CD8-positive, alpha-beta T cell (primary cell): ENCODE measurements at regions of chr1 and their contacts with region 1.

Region 1: GRCh38 chr1:1307908-1308755 is at the starts of genes ACAP3 and PUSL1:
- DNase-seq: peak; percentile 79 to 96 (median 87)
- ATAC-seq: peak; percentile 72
- H3K4me3 ChIP-seq: peak within 1 kb of the TSS; percentile 59 to 94
- H3K4me3 Mint-ChIP-seq: peak within 1 kb of the TSS; percentile 87
- H3K27ac ChIP-seq: peak within 1 kb of the TSS; percentile 79 to 82
- H3K27ac Mint-ChIP-seq: peak within 1 kb of the TSS; percentile 90
- H3K4me1 ChIP-seq: peaks cover 35% of the 10 kb centered on the region
- H3K4me1 Mint-ChIP-seq: peaks cover 20% of the 10 kb centered on the region
- H3K27me3 ChIP-seq: no peaks in the 10 kb centered on the region
- H3K27me3 Mint-ChIP-seq: no peaks in the 10 kb centered on the region
- CTCF ChIP-seq: no peak
- total RNA-seq, gene ACAP3: 46.6 to 47.5 TPM
- total RNA-seq, gene PUSL1: 17.1 to 17.5 TPM

Region 2: GRCh38 chr1:958823-959729 is 349.1 kb before region 1 on chr1 and contains the start of gene NOC2L:
- CTCF ChIA-PET with region 1: no interaction called
- POLR2A ChIA-PET with region 1: no interaction called
- intact Hi-C with region 1: loop called in 1 of 2 experiments (anchors 1 kb)
- DNase-seq: peak; percentile 91 to 99 (median 96)
- ATAC-seq: peak; percentile 83
- H3K4me3 ChIP-seq: peak within 1 kb of the TSS; percentile 99 to 100
- H3K4me3 Mint-ChIP-seq: peak within 1 kb of the TSS; percentile 86
- H3K27ac ChIP-seq: peak within 1 kb of the TSS; percentile 75 to 80
- H3K27ac Mint-ChIP-seq: peak within 1 kb of the TSS; percentile 77
- H3K4me1 ChIP-seq: peaks cover 29% of the 10 kb centered on the region
- H3K4me1 Mint-ChIP-seq: peaks cover 8% of the 10 kb centered on the region
- H3K27me3 ChIP-seq: no peaks in the 10 kb centered on the region
- H3K27me3 Mint-ChIP-seq: no peaks in the 10 kb centered on the region
- CTCF ChIP-seq: no peak
- total RNA-seq, gene NOC2L: 54.0 to 54.7 TPM

Region 3: DNA sequence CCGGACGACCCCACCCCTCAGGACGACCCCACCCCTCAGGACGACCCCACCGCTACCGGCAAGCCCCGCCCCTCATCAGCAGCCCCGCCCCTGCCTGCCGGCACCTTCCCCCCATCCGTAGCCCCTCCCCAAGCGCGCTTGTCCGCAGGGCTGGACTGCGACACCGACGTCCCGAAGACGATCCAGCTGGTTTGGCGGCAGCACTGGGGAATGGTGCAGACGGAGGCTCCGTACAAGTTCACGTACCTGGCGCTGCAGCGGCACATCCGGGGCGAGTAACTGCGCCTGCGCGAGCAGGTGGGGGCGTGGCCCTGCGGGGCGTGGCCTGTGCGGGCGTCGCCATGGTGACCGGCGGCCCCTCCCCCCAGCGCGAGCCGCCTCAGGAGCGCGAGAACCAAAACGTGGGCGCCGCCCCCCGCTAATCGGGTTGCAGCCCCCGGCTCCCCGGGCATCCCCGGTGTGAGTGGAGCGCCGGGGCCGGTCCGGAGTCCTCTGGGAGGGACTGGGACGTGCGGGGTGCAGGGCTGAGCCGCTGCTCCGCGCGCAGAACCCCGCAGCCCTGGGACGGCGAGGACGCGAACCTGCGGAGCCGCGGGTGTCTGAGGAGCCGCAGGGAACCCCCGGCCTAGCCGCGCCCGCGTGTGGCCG is 238.9 kb before region 1 on chr1:
- CTCF ChIA-PET with region 1: no interaction called
- POLR2A ChIA-PET with region 1: no interaction called
- intact Hi-C with region 1: loop called in 1 of 2 experiments (anchors 5 kb)
- DNase-seq: peak; percentile 86 to 97 (median 89)
- ATAC-seq: peak; percentile 58
- H3K4me3 ChIP-seq: peak overlapping the region; percentile 65 to 88
- H3K4me3 Mint-ChIP-seq: peak overlapping the region; percentile 81
- H3K27ac ChIP-seq: peak overlapping the region; percentile 53 to 55
- H3K27ac Mint-ChIP-seq: peak overlapping the region; percentile 80
- H3K4me1 ChIP-seq: peaks cover 20% of the 10 kb centered on the region
- H3K4me1 Mint-ChIP-seq: peaks cover 7% of the 10 kb centered on the region
- H3K27me3 ChIP-seq: peaks cover 0 to 8% of the 10 kb centered on the region in 2 experiments
- H3K27me3 Mint-ChIP-seq: no peaks in the 10 kb centered on the region
- CTCF ChIP-seq: no peak

Region 4: DNA sequence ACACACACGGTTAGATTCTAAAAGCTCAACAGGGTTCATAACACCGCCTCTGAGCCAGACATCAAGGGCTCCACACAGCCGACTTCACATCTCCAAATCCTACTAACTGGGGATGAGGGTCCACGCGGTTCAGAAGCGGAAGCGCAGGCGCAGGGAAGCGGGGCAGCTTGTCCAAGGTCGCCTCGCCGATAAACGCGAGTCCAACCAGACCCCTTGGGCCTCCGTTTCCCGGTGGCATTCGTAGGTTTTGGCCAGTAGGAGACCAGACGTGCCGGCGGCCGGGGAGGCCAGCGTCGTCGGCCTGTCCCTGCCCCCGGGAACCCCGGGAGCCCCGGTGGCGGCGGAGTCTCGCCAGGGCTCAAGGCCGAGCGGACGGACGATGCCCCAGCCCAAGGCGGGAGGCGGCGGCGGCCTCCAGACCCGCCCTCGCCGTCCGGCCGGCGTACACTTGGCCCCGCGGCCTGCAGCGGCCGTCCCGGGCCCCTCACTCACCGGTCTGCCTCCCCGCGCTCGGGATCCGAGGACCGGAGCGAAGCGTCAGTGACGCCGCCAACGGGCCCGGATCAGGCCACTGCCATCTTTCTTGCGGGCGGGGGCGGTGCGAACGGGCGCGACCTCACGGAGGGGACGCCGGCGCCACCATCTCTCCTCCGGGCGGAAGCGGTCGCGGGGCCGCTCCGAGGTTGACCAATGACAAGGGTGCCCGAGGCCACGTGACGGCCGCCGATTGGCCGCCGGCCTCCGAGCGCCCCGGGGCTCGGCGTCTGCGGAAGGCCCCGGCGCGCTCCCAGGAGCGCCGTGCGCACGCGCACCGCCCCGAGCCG is 76.5 kb before region 1 on chr1 and contains the start of gene SDF4:
- CTCF ChIA-PET with region 1: no interaction called
- POLR2A ChIA-PET with region 1: no interaction called
- intact Hi-C with region 1: loop called in 1 of 2 experiments (anchors 1 kb)
- DNase-seq: peak; percentile 91 to 99 (median 96)
- ATAC-seq: peak; percentile 93
- H3K4me3 ChIP-seq: peak within 1 kb of the TSS; percentile 92 to 96
- H3K4me3 Mint-ChIP-seq: peak within 1 kb of the TSS; percentile 93
- H3K27ac ChIP-seq: peak within 1 kb of the TSS; percentile 80 to 88
- H3K27ac Mint-ChIP-seq: peak within 1 kb of the TSS; percentile 92
- H3K4me1 ChIP-seq: peaks cover 40% of the 10 kb centered on the region
- H3K4me1 Mint-ChIP-seq: peaks cover 39% of the 10 kb centered on the region
- H3K27me3 ChIP-seq: no peaks in the 10 kb centered on the region
- H3K27me3 Mint-ChIP-seq: no peaks in the 10 kb centered on the region
- CTCF ChIP-seq: no peak
- total RNA-seq, gene SDF4: 66.6 to 70.3 TPM

Region 5: GRCh38 chr1:1349256-1350012 is 41.3 kb after region 1 on chr1 and contains the start of gene DVL1:
- CTCF ChIA-PET with region 1: interaction called, 3 read pairs
- POLR2A ChIA-PET with region 1: interaction called, 3 read pairs
- intact Hi-C with region 1: loop called in 1 of 2 experiments (anchors 1 kb)
- DNase-seq: peak; percentile 50 to 86 (median 72)
- ATAC-seq: peak; percentile 84
- H3K4me3 ChIP-seq: peak within 1 kb of the TSS; percentile 57 to 63
- H3K4me3 Mint-ChIP-seq: peak within 1 kb of the TSS; percentile 76
- H3K27ac ChIP-seq: peak within 1 kb of the TSS; percentile 46 to 72
- H3K27ac Mint-ChIP-seq: peak within 1 kb of the TSS; percentile 41
- H3K4me1 ChIP-seq: peaks cover 27% of the 10 kb centered on the region
- H3K4me1 Mint-ChIP-seq: peaks cover 29% of the 10 kb centered on the region
- H3K27me3 ChIP-seq: peaks cover 0 to 16% of the 10 kb centered on the region in 2 experiments
- H3K27me3 Mint-ChIP-seq: peaks cover 8% of the 10 kb centered on the region
- CTCF ChIP-seq: peak; percentile 43
- total RNA-seq, gene DVL1: 44.5 to 45.5 TPM

Region 6: DNA sequence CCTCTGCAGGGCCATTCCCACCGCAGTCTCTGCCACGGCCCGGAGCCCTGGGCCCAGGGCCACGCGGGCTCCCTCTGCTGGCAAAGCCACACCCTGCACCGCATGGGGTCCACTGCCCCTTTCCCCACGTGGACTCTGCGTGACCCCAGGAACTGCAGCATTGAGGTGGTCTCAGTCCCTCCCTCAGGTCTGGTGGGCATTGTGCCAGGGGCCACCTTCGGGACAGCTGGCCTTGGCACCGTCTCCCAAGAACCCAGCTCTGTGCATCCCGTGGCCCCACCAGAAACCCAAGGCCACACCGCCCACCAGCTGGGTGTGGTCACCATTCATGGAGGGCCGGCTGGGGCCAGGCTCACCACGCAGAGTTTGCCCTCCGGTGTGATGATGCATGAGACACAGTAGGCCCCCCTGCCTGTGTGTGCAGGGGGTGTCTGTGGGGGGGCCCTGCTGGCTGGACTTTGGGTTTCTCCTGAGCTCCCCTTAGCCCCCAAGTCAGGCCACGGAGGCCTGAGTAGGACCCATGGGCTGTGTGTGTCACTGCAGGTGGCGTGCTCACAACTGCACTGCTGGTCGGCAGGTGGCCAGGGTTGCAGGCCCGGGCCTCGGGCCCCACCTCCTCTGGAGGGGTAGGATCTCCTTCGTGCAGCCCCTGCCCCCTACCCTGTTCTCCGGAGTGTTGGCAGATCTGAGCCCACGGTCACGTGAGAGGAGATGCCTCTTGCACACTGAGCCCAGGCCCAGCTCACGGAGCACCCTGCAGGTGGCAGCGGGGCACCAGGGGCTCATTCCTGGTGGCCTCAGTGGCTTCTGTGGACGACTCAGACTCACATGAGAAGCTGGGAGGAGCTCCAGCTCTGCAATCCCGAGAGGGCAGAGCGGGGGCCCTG is 133.1 kb after region 1 on chr1:
- CTCF ChIA-PET with region 1: no interaction called
- POLR2A ChIA-PET with region 1: no interaction called
- intact Hi-C with region 1: loop called in 1 of 2 experiments (anchors 5 kb)
- DNase-seq: peak; percentile 22 to 74 (median 59)
- ATAC-seq: peak; percentile 94
- H3K4me3 ChIP-seq: no peak overlapping the region
- H3K4me3 Mint-ChIP-seq: no peak overlapping the region
- H3K27ac ChIP-seq: no peak overlapping the region
- H3K27ac Mint-ChIP-seq: no peak overlapping the region
- H3K4me1 ChIP-seq: peaks cover 9% of the 10 kb centered on the region
- H3K4me1 Mint-ChIP-seq: peaks cover 5% of the 10 kb centered on the region
- H3K27me3 ChIP-seq: peaks cover 12 to 16% of the 10 kb centered on the region in 2 experiments
- H3K27me3 Mint-ChIP-seq: peaks cover 10% of the 10 kb centered on the region
- CTCF ChIP-seq: peak; percentile 85